Heart left ventricle (tissue), 16 donors: ENCODE measurements at regions of chr18 and their contacts with region 1.

Region 1: GRCh38 chr18:34358923-34359322 is 134.2 kb upstream of the NOL4 start:
- DNase-seq: no peak
- ATAC-seq: peak in 2 of 4 donors; percentile 39 to 56
- H3K4me3 ChIP-seq: no peak overlapping the region
- H3K27ac ChIP-seq: no peak overlapping the region
- H3K4me1 ChIP-seq: peaks cover 0 to 3% (median 0%) of the 10 kb centered on the region in 12 donors
- H3K27me3 ChIP-seq: no peaks in the 10 kb centered on the region
- CTCF ChIP-seq: no peak
- POLR2A ChIP-seq: no peak

Region 2: DNA sequence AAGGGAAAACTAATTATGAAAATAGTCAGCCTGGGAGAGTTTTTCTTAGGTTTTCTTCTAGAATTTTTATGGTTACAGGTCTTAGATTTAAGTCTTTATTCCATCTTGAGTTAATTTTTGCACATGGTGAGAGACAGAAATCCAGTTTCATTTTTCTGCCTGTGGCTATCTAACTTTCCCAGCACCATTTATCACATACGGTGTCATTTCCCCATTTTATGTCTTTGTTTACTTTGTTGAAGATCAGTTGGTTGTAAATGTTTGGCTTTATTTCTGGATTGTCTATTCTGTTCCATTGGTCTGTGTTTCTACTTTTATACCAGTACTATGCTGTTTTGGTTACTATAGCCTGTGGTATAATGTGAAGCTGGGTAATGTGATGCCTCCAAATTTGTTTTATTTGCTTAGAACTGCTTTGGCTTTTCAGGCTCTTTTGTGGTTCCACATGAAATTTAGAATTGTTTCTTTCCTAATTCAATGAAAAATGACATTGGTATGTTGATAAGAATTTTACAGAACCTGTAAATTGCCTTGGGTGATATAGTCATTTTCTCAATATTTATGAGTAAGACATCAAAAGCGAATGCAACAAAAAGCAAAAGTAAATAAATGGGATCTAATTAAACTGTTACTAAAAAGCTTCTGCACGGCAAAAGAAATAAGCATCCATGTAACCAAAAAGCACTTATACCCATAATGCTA is 11.9 kb after region 1 on chr18:
- intact Hi-C with region 1: loop called in 1 of 10 experiments (anchors 1 kb)
- DNase-seq: no peak
- ATAC-seq: no peak
- H3K4me3 ChIP-seq: no peak overlapping the region
- H3K27ac ChIP-seq: no peak overlapping the region
- H3K4me1 ChIP-seq: no peaks in the 10 kb centered on the region
- H3K27me3 ChIP-seq: no peaks in the 10 kb centered on the region
- CTCF ChIP-seq: no peak
- POLR2A ChIP-seq: no peak

Region 3: DNA sequence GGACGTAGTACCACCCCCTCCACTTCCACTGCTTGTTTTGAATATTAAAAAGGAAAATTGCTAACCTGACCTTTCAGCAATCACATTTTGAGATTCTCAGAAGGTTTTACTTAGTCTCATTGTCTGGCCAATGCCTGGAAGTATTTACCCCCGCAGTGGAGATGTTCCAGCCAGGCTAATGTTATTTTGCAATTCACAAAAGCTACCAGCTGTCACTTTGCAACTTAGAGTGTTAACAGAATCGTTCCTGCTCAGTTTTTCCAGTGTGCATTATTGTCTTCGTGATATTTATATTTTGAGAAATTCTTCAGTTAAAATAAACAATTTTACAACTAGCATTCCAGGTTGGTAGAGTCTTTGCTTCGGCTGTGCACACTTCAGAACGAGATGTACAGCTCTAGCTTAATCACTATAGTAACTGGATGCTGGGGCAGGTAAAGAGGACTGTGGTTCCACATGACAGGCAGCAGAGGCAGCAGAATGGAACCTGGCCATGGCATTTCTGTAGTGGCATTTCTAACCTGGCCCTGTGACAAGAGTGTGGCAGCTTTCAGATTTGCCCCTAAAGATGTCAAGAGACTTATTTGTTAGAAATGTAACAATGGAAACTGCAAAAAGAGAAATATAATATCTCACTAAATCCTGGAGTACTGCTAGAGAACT is 436.3 kb after region 1 on chr18:
- intact Hi-C with region 1: loop called in 1 of 10 experiments (anchors 5 kb)
- DNase-seq: peak in 4 of 5 donors; percentile 20 to 53 (median 40)
- ATAC-seq: peak; percentile 82 to 89 (median 86)
- H3K4me3 ChIP-seq: no peak overlapping the region
- H3K27ac ChIP-seq: peak overlapping the region in 4 of 12 donors; percentile 3 to 64 (median 23)
- H3K4me1 ChIP-seq: peaks cover 0 to 24% (median 9%) of the 10 kb centered on the region in 12 donors
- H3K27me3 ChIP-seq: no peaks in the 10 kb centered on the region
- CTCF ChIP-seq: peak in 2 of 12 donors; percentile 9 to 18
- POLR2A ChIP-seq: no peak